ENCODE measurements at regions of chr16 and their contacts with region 1.

Region 1: GRCh38 chr16:24010440-24011089 is 174.8 kb downstream of the PRKCB start:
- DNase-seq: peak; percentile 10 to 80
- H3K4me3 ChIP-seq: no peak overlapping the region
- H3K27ac ChIP-seq: no peak overlapping the region
- H3K4me1 ChIP-seq: no peaks in the 10 kb centered on the region
- H3K27me3 ChIP-seq: no peaks in the 10 kb centered on the region
- CTCF ChIP-seq: peak; percentile 72 to 83 (median 82)
- EP300 ChIP-seq: no peak
- POLR2A ChIP-seq: no peak
- RAD21 ChIP-seq: peak; percentile 83 to 89

Region 2: DNA sequence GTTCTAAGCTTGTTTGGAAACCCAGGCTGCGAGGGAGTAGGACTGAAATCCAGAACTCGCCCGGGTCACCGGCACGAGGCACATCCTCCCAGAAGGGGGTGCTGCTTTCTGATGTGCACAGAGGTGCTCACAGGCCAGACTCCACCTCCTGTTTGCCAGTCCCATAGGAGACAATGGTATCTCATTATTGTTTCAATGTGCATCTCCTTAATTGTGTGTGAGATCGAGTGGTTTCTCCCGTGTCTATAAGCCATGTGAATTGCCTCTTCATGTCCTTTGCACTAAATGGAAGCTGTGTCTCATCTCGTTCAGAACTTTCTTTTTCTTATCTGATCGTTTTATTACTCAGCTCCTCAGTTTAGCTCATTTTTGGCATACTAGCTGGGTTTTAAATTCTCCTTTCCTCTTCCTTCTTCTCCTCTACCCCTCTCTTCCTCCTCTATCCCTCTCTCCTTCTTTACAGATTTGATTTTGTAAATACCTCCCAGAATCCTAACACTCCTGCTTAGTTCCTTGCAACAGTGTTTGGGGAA is 206.9 kb before region 1 on chr16:
- CTCF ChIA-PET with region 1: interaction called, 36 read pairs
- POLR2A ChIA-PET with region 1: no interaction called
- DNase-seq: peak; percentile 31 to 78
- H3K4me3 ChIP-seq: no peak overlapping the region
- H3K27ac ChIP-seq: no peak overlapping the region
- H3K4me1 ChIP-seq: no peaks in the 10 kb centered on the region
- H3K27me3 ChIP-seq: no peaks in the 10 kb centered on the region
- CTCF ChIP-seq: peak; percentile 83 to 86 (median 84)
- EP300 ChIP-seq: no peak
- POLR2A ChIP-seq: no peak
- RAD21 ChIP-seq: peak; percentile 76 to 78

Region 3: DNA sequence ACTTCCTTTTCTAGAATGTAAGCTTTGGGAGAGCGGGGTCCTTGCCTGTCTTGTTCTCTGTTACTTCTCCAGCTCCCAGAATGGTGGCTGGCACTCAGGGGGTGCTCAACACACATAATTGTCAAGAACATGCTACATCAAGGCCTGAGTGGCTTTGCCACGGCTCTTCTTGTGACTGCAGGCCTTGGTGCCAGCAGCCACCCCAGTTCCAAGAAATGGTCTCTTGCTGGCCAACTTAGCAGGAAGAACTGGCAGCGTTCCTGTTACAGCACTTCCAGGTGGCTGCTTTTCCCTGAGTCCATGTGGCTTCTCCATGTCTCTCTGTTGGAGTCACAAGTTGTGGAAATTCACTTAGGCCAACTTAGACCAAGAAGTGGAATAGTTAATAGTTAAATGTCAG is 138.6 kb before region 1 on chr16:
- CTCF ChIA-PET with region 1: interaction called, 52 read pairs
- POLR2A ChIA-PET with region 1: no interaction called
- DNase-seq: no peak
- H3K4me3 ChIP-seq: no peak overlapping the region
- H3K27ac ChIP-seq: no peak overlapping the region
- H3K4me1 ChIP-seq: peaks cover 0 to 2% (median 0%) of the 10 kb centered on the region in 4 experiments; a peak in 2 of 7 replicates
- H3K27me3 ChIP-seq: peaks cover 3 to 19% (median 10%) of the 10 kb centered on the region in 4 experiments
- CTCF ChIP-seq: no peak
- EP300 ChIP-seq: no peak
- POLR2A ChIP-seq: no peak
- RAD21 ChIP-seq: no peak

Region 4: GRCh38 chr16:23930791-23931190 is 79.8 kb before region 1 on chr16:
- CTCF ChIA-PET with region 1: interaction called, 11 read pairs
- POLR2A ChIA-PET with region 1: no interaction called
- DNase-seq: no peak
- H3K4me3 ChIP-seq: no peak overlapping the region
- H3K27ac ChIP-seq: no peak overlapping the region
- H3K4me1 ChIP-seq: no peaks in the 10 kb centered on the region; a peak in 1 of 7 replicates
- H3K27me3 ChIP-seq: no peaks in the 10 kb centered on the region
- CTCF ChIP-seq: no peak
- EP300 ChIP-seq: no peak
- POLR2A ChIP-seq: no peak
- RAD21 ChIP-seq: no peak

Region 5: DNA sequence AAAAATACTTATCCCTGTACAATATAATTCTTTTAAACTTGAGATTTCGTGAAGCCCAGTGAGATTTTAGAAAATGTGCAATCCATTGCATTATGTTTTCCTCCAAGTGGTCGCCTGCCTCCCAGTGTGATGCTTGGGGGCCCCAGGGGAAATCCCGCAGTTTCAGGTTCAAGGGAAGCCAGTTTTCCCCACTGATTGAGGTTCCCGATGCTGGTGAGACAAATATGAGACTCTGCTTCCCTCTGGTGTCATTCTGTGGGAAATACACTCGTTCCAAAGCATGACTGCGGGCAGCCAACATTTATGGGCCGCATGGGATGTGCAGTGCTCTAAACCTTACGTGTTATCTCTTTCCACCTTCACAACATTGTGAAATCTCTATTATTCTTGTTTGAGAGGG is 26.0 kb after region 1 on chr16:
- CTCF ChIA-PET with region 1: interaction called, 19 read pairs
- POLR2A ChIA-PET with region 1: interaction called, 4 read pairs
- DNase-seq: peak in 1 of 2 experiments; percentile 70
- H3K4me3 ChIP-seq: no peak overlapping the region
- H3K27ac ChIP-seq: no peak overlapping the region
- H3K4me1 ChIP-seq: no peaks in the 10 kb centered on the region; a peak in 1 of 7 replicates
- H3K27me3 ChIP-seq: no peaks in the 10 kb centered on the region
- CTCF ChIP-seq: peak; percentile 62 to 89 (median 87)
- EP300 ChIP-seq: no peak
- POLR2A ChIP-seq: no peak
- RAD21 ChIP-seq: peak; percentile 98 to 99

Region 6: DNA sequence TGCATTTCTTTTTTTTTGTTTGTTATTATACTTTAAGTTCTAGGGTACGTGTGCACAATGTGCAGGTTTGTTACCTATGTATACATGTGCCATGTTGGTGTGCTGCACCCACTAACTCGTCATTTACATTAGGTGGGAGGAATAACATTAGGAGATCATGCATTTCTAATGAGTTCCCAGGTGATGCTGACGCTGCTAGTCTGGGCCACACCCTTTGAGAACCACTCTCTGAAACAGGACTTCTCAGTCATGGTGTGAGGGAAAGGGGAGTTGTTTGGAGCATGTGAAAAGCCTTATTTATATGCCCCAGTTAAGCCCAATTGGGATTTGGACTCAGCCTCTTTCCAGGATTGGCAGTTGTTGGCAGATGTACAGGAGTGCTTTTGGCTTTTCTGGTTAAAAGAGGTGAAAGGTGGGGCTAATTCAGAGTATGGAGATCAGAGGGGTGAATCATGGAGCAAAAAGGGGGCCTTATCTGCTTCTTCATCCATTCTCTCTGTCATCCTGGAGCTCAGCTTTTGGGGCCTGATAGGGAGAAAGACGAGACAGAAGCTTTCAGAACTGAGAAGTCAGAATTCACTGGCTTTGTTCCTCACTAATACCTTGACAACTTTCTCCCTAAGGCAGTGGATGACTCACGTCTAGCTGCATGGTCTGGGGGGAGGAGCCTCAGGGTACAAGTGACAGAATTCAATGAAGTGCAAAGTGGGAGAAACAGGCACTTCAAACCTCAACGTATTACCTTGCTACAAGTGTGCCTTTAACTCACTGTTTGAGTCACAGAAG is 65.6 kb after region 1 on chr16:
- CTCF ChIA-PET with region 1: no interaction called
- POLR2A ChIA-PET with region 1: no interaction called
- DNase-seq: no peak
- H3K4me3 ChIP-seq: no peak overlapping the region
- H3K27ac ChIP-seq: no peak overlapping the region
- H3K4me1 ChIP-seq: peaks cover 0 to 6% (median 4%) of the 10 kb centered on the region in 4 experiments; a peak in 4 of 7 replicates
- H3K27me3 ChIP-seq: no peaks in the 10 kb centered on the region
- CTCF ChIP-seq: no peak
- EP300 ChIP-seq: no peak
- POLR2A ChIP-seq: no peak
- RAD21 ChIP-seq: no peak

Region 7: DNA sequence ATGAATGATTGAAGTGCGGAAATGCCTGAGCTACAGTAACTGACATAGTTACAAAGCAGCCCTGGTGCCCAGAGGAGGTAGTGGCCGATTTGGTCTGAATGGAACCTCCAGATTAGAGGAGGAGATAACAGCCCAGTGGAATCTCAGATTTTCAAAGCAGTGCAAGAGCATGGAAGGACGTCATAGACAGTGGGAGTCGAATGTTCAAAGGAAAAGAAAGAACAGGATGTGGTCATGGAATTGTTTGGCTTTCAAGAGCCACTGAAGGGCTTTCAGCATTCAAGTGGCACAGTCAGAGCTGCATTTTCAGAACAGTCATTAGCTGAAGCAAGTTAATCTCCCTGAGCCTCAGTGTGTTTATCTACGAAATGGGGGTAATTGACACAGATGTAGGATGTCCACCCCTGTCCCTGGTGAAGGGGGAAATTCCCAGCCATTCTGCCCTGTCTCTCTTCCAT is 140.9 kb after region 1 on chr16:
- CTCF ChIA-PET with region 1: no interaction called
- POLR2A ChIA-PET with region 1: no interaction called
- DNase-seq: no peak
- H3K4me3 ChIP-seq: no peak overlapping the region
- H3K27ac ChIP-seq: no peak overlapping the region
- H3K4me1 ChIP-seq: peaks cover 0 to 4% (median 0%) of the 10 kb centered on the region in 4 experiments; a peak in 3 of 7 replicates
- H3K27me3 ChIP-seq: no peaks in the 10 kb centered on the region
- CTCF ChIP-seq: no peak
- EP300 ChIP-seq: no peak
- POLR2A ChIP-seq: no peak
- RAD21 ChIP-seq: 0 out of 4 replicates have a peak, but pooled peaks of 1 of the 2 experiments have one; percentile 5

Measured in H1 (cell line).